ENCODE measurements at regions of chr9 and their contacts with region 1.

Region 1: DNA sequence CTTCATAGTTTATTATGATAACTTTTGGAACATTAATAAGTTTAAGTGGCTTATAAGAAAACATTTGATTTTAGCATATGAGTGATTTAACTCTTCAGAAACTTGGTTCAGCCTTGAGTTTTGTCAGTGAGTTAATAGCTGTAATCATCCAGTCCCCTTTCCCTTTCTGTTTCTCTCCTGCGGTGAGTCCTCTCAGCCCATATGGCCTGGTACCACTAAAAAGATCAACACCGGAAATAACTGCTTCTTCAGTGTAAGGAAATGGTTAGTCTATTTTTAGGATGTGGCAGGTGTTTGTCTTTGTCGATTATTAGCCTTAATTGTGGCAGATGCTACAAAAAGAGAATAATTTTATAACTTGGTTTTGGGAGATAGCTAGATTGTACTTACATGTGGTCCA is 120.2 kb upstream of the GRHPR start:
- DNase-seq: no peak
- ATAC-seq: peak; percentile 84
- H3K4me3 Mint-ChIP-seq: peak overlapping the region; percentile 73
- H3K27ac Mint-ChIP-seq: peak overlapping the region; percentile 96
- H3K4me1 Mint-ChIP-seq: peaks cover 83% of the 10 kb centered on the region
- H3K27me3 Mint-ChIP-seq: no peaks in the 10 kb centered on the region
- CTCF ChIP-seq: no peak

Region 2: GRCh38 chr9:36974731-36975130 is 327.5 kb before region 1 on chr9:
- CTCF ChIA-PET with region 1: no interaction called
- POLR2A ChIA-PET with region 1: no interaction called
- intact Hi-C with region 1: no loop called
- DNase-seq: no peak
- ATAC-seq: no peak
- H3K4me3 Mint-ChIP-seq: no peak overlapping the region
- H3K27ac Mint-ChIP-seq: peak overlapping the region; percentile 70
- H3K4me1 Mint-ChIP-seq: peaks cover 77% of the 10 kb centered on the region
- H3K27me3 Mint-ChIP-seq: no peaks in the 10 kb centered on the region
- CTCF ChIP-seq: no peak

Region 3: GRCh38 chr9:37079370-37080164 is 222.7 kb before region 1 on chr9:
- CTCF ChIA-PET with region 1: interaction called, 3 read pairs
- POLR2A ChIA-PET with region 1: interaction called, 4 read pairs
- intact Hi-C with region 1: loop called (anchors 5 kb)
- DNase-seq: peak; percentile 78
- ATAC-seq: peak; percentile 93
- H3K4me3 Mint-ChIP-seq: peak overlapping the region; percentile 94
- H3K27ac Mint-ChIP-seq: peak overlapping the region; percentile 95
- H3K4me1 Mint-ChIP-seq: peaks cover 78% of the 10 kb centered on the region
- H3K27me3 Mint-ChIP-seq: no peaks in the 10 kb centered on the region
- CTCF ChIP-seq: no peak

Region 4: DNA sequence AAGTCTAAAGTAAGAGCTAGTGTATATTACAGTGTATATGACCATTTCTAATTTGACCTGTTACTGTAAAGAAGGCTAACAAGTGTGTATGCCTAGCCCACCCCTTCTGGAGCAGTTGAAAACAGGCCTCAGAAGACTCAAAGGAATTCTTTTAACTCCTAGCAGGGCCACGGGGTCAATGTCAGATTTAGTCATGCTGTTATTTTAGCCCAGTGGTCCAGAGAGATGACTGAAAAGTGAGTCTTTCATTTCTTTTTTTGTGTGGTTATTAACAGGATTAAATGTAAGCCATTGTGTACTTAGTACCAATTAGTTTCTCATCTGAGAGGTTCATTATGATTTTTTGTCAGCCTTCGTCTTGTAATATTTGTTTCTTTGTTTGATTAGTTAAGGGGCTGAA is 157.5 kb before region 1 on chr9:
- CTCF ChIA-PET with region 1: no interaction called
- POLR2A ChIA-PET with region 1: no interaction called
- intact Hi-C with region 1: loop called (anchors 5 kb)
- DNase-seq: no peak
- ATAC-seq: peak; percentile 25
- H3K4me3 Mint-ChIP-seq: peak overlapping the region; percentile 20
- H3K27ac Mint-ChIP-seq: peak overlapping the region; percentile 82
- H3K4me1 Mint-ChIP-seq: peaks cover 68% of the 10 kb centered on the region
- H3K27me3 Mint-ChIP-seq: no peaks in the 10 kb centered on the region
- CTCF ChIP-seq: no peak

Region 5: DNA sequence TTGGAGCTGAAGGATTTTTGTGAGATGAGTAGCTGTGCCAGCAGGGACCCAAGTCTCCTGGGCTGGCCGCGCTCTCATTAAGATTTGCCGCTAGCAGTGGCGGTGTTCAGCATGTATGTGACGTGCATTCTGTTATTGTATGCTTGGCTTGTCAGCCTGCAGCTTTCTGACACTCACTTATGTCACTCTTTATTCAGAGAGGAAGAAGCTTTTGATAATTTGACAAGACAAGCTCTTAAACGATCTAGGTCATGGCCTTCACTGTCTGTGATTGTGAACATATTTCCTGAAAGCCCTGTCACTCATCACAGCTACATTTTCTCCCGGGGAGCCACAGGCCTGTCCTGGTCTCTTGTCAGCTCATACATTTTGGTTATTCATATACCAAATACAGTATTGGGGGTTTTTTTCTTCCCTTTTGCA is 22.0 kb after region 1 on chr9:
- CTCF ChIA-PET with region 1: interaction called, 5 read pairs
- POLR2A ChIA-PET with region 1: interaction called, 32 read pairs
- intact Hi-C with region 1: loop called (anchors 1 kb)
- DNase-seq: peak; percentile 42
- ATAC-seq: peak; percentile 86
- H3K4me3 Mint-ChIP-seq: peak overlapping the region; percentile 59
- H3K27ac Mint-ChIP-seq: peak overlapping the region; percentile 99
- H3K4me1 Mint-ChIP-seq: peaks cover 69% of the 10 kb centered on the region
- H3K27me3 Mint-ChIP-seq: no peaks in the 10 kb centered on the region
- CTCF ChIP-seq: no peak

Region 6: GRCh38 chr9:37528652-37529510 is 226.6 kb after region 1 on chr9:
- CTCF ChIA-PET with region 1: no interaction called
- POLR2A ChIA-PET with region 1: no interaction called
- intact Hi-C with region 1: no loop called
- DNase-seq: peak; percentile 43
- ATAC-seq: peak; percentile 72
- H3K4me3 Mint-ChIP-seq: peak overlapping the region; percentile 57
- H3K27ac Mint-ChIP-seq: peak overlapping the region; percentile 76
- H3K4me1 Mint-ChIP-seq: peaks cover 38% of the 10 kb centered on the region
- H3K27me3 Mint-ChIP-seq: no peaks in the 10 kb centered on the region
- CTCF ChIP-seq: no peak